ENCODE measurements at regions of chr10 and their contacts with region 1.

Region 1: GRCh38 chr10:88728107-88728763 is 22.2 kb downstream of the LIPK start:
- DNase-seq: peak; percentile 85
- ATAC-seq: peak; percentile 64
- H3K4me3 Mint-ChIP-seq: no peak overlapping the region
- H3K27ac Mint-ChIP-seq: no peak overlapping the region
- H3K4me1 Mint-ChIP-seq: peaks cover 6% of the 10 kb centered on the region
- H3K27me3 Mint-ChIP-seq: peaks cover 2% of the 10 kb centered on the region

Region 2: DNA sequence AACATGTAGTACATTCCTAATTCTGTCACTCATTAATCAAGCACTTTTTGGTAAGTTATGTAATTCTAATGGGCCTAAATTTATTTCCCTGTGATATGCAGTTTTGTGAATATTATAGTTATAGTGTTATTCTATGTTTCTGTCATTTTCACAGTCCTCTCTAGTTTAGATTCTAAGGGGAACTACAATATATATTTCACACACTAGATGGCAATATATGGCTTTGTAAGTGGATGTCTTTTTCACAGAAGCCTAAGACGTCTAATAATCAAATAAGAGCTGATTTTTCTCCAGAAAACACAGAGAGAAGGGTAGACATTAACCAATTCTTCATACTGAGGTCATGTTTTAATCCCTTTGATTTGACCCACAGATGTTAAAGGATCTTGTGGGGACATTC is 163.2 kb before region 1 on chr10:
- CTCF ChIA-PET with region 1: interaction called, 9 read pairs
- POLR2A ChIA-PET with region 1: no interaction called
- intact Hi-C with region 1: loop called in 1 of 2 experiments (anchors 2 kb)
- DNase-seq: no peak
- ATAC-seq: peak; percentile 47
- H3K4me3 Mint-ChIP-seq: no peak overlapping the region
- H3K27ac Mint-ChIP-seq: no peak overlapping the region
- H3K4me1 Mint-ChIP-seq: no peaks in the 10 kb centered on the region
- H3K27me3 Mint-ChIP-seq: no peaks in the 10 kb centered on the region

Measured in activated CD4-positive, alpha-beta T cell treated with anti-CD3 and anti-CD28 coated beads for 36 hours (primary cell).